ENCODE measurements at regions of chr1 and their contacts with region 1.

Region 1: DNA sequence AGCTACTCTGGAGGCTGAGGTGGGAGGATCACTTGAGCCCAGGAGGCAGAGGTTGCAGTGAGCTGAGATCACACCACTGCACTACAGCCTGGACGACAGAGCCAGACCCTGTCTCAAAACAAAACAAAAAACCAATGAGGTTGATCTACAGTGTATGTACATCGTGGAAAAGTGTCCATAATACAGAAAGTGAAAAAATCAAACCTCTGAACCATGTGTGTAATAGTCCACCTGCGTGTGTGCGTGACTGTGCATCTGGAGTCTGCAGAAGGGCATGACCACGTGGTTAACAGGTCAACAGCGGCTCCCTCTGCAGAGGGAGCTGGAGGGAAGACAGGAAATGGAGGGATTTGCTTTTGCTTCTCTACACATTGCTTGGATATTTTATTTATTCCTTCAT is 32.4 kb upstream of the ENO1 start:
- DNase-seq: no peak

Region 2: GRCh38 chr1:8765198-8765597 is 145.7 kb before region 1 on chr1:
- intact Hi-C with region 1: no loop called
- DNase-seq: no peak

Region 3: DNA sequence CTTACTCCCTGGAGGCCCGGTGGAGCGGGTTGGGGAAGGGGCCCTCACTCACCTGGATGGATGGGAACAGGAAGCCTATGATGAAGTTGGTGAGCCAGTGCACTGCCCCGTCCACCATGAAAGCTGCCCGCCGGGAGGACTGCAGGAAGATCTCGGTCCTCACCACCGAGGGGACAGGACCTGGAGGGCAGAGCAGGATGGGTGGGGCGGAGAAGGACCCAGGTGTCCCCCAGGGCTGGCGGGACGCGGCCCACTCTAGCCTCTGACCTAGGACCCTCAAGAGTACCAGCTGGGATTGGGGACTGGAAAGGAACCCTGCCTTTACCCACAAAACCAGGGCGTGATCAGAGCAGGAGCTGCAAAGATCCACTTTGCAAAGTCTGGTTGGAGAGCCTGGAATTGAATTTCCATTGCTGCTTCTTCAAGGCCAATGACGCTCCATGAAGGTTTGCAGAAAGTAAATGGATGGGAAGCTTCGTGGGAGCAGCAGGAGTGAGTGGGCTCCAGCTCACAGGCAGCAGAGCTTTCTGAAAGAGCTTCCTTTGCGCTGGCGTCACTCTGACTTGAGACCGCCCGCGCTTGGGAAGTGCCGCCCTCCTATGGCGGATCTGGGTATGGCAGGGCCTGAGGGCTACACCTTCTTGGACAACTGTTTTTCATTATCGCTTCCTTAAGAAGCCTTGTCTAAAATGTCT is 93.9 kb after region 1 on chr1:
- intact Hi-C with region 1: loop called (anchors 5 kb)
- DNase-seq: peak; percentile 88

Region 4: DNA sequence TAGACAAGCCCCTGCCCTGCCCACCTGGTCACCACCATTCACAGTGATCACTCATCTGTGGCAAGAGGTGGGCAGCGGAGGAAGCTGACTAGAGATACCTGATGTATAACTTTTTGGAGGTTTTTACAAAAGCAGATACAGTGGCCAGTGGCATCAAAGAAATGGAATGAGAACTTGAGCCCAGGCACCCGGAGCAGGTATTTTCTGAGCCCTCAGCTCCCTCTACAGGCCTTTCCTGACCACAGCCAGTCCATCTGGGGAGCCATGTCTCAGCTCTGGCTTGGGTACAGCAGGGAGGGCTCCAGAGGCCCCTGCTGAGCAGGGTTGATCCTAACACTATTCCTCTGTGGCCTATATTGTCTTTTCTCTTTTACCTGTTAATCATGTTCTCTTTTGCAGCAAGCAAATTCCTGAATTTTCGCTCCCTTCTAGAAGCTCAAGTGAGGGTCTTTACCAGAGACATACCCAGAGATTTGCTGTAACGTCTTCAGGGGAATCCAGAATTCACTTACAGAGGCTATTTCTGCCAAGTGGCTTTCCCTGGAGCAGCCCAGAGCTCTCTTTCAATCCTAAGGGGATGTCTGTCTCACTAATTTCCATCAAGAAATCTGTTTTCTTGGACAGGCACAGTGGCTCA is 190.7 kb after region 1 on chr1:
- intact Hi-C with region 1: loop called (anchors 5 kb)
- DNase-seq: no peak